Adrenal gland (tissue), 19 donors: ENCODE measurements at regions of chr7 and their contacts with region 1.

Region 1: GRCh38 chr7:90155206-90155605 is 937 bp downstream of the STEAP1 start:
- DNase-seq: no peak
- H3K4me3 ChIP-seq: no peak overlapping the region
- H3K27ac ChIP-seq: no peak overlapping the region
- H3K4me1 ChIP-seq: peaks cover 0 to 4% of the 10 kb centered on the region in 2 donors
- H3K27me3 ChIP-seq: no peaks in the 10 kb centered on the region
- CTCF ChIP-seq: no peak
- POLR2A ChIP-seq: no peak

Region 2: GRCh38 chr7:90244909-90245851 is 90.0 kb after region 1 on chr7 and contains the start of gene CFAP69:
- intact Hi-C with region 1: loop called in 1 of 2 experiments (anchors 10 kb)
- DNase-seq: peak; percentile 88 to 97 (median 91)
- H3K4me3 ChIP-seq: peak within 1 kb of the TSS; percentile 48 to 99 (median 80)
- H3K27ac ChIP-seq: peak within 1 kb of the TSS in 1 of 5 donors; percentile 49
- H3K4me1 ChIP-seq: peaks cover 0 to 15% of the 10 kb centered on the region in 2 donors
- H3K27me3 ChIP-seq: no peaks in the 10 kb centered on the region
- CTCF ChIP-seq: peak in 5 of 6 experiments; percentile 6 to 65 (median 52)
- POLR2A ChIP-seq: no peak
- total RNA-seq, gene CFAP69: 0.42 to 7.9 (median 4.1) TPM

Region 3: DNA sequence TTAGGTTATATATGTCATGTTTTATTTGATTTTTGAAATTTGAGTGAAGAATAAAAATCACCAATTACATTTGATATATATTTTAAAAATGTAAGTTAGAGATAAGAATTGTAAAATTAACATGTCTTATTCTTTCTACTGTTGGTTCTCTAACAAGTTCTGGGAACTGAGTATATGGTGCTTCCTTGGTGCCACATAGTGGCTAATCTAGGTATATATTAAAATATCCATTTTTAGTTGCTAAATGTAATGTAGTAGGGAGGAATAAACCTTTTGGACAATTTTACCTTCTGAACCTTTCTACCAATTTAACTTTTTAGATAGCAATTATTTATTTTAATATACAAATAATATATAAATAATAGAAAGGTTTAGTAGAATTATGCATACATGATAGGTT is 107.2 kb after region 1 on chr7:
- intact Hi-C with region 1: loop called in 1 of 2 experiments (anchors 5 kb)
- DNase-seq: no peak
- H3K4me3 ChIP-seq: no peak overlapping the region
- H3K27ac ChIP-seq: no peak overlapping the region
- H3K4me1 ChIP-seq: peaks cover 0 to 13% of the 10 kb centered on the region in 2 donors
- H3K27me3 ChIP-seq: no peaks in the 10 kb centered on the region
- CTCF ChIP-seq: peak; percentile 38 to 64 (median 42)
- POLR2A ChIP-seq: no peak

Region 4: GRCh38 chr7:90430614-90431471 is 275.6 kb after region 1 on chr7:
- intact Hi-C with region 1: loop called in 1 of 2 experiments (anchors 5 kb)
- DNase-seq: no peak
- H3K4me3 ChIP-seq: no peak overlapping the region
- H3K27ac ChIP-seq: no peak overlapping the region
- H3K4me1 ChIP-seq: no peaks in the 10 kb centered on the region
- H3K27me3 ChIP-seq: no peaks in the 10 kb centered on the region
- CTCF ChIP-seq: no peak
- POLR2A ChIP-seq: no peak